Activated T-helper 1 cell treated with anti-CD3 and anti-CD28 coated beads, Interleukin-12 subunit alpha, Interleukin-12 subunit beta, Interleukin-2, Interleukin-4 antibody, amounts not matched to agents 30 ng/mL and 10 ng/mL and 1 ng/mL, durations not matched to agents 14 hours and 24 hours and 36 hours (primary cell): ENCODE measurements at regions of chr6 and their contacts with region 1.

Region 1: DNA sequence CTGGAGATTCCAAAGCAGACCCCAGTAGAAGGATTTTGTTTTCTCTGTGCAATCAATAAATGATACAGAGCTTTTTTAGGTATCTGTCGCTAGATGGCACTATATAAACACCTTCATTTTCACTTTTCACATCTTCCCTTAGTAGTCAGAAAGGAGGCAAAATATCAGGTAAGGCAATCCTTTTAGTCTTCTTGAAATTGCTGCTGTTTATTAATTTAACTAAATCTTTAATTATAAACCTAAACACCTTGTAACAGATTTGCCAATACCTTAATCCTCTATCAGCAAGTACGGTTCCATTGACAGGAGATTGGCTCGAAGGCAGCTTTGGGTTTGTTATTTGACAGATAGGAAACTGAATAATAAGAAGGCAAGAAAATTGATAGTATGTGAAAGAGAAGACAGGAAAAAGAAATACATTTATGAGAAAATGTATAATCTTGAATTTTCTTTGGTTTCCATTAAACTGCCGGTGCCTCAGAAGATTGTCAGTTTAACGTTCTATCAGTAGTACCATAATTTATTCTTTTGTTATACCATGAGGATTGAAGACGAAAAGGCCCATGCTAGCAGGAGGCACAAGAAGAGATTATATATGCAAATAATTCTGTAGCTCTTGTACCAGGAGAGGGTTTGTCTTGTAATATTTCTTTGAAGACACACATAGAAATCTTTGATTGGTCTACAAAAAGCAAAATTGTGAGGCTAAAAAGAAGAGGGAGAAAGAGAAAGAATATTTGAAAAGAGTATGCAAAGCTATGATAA is 23.5 kb upstream of the IBTK start:
- DNase-seq: no peak
- H3K4me3 Mint-ChIP-seq: no peak overlapping the region
- H3K27ac Mint-ChIP-seq: no peak overlapping the region
- H3K4me1 Mint-ChIP-seq: no peaks in the 10 kb centered on the region
- H3K27me3 Mint-ChIP-seq: peaks cover 11% of the 10 kb centered on the region

Region 2: DNA sequence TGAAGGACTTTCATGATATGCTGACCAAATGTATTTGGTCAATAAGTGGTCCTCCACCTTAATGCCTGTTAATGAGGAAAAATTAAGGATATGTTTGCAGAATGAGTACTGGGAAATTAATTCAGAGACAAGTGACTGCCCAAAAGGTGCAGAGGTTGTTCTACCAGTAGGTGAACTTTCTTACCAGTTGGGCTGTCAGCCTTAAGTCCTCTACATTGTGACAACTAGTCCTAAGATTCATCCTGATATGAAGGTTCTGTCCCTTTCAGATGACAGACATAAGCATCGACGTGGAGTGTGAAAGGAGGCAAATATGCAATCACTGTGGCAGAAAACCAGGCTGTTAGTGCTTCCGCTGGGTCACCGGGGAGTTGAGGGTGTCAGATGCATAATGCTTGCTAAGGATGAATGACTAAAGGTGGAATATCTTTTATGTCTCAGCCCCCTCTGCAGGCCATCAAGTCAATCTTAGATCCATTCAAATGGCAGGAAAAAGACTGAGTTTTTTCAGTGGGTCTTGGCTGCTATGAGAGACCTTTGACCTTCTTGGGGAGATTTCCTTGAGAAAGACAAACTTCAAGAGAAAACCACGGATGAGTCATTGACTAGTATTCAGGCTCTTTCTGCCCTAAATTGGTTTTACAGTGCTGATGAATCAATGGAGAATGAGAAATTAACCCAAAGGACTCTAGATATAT is 318.6 kb after region 1 on chr6:
- intact Hi-C with region 1: loop called (anchors 5 kb)
- DNase-seq: no peak
- H3K4me3 Mint-ChIP-seq: no peak overlapping the region
- H3K27ac Mint-ChIP-seq: no peak overlapping the region
- H3K4me1 Mint-ChIP-seq: no peaks in the 10 kb centered on the region
- H3K27me3 Mint-ChIP-seq: no peaks in the 10 kb centered on the region

Region 3: DNA sequence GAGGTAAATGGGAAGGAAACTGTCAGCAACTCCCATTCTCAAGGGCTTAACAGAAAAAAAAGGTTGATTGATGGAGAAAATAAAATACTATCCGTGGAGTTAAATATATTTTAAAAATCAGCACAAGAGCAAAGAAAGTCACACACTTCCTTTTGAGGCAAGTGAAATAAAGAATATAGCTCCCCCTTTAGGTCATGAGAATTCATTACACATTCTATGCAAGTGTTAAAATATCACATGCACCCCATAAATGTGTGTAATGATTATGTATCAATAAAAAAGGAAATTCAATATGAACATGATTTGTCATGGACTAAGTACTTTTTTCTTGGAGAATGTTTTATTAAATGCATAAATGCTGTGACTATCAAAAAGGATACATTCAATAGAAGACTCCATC is 441.8 kb after region 1 on chr6:
- intact Hi-C with region 1: loop called (anchors 1 kb)
- DNase-seq: no peak
- H3K4me3 Mint-ChIP-seq: no peak overlapping the region
- H3K27ac Mint-ChIP-seq: no peak overlapping the region
- H3K4me1 Mint-ChIP-seq: no peaks in the 10 kb centered on the region
- H3K27me3 Mint-ChIP-seq: no peaks in the 10 kb centered on the region

Region 4: GRCh38 chr6:83055366-83055964 is 784.4 kb after region 1 on chr6:
- intact Hi-C with region 1: loop called (anchors 1 kb)
- DNase-seq: no peak
- H3K4me3 Mint-ChIP-seq: no peak overlapping the region
- H3K27ac Mint-ChIP-seq: no peak overlapping the region
- H3K4me1 Mint-ChIP-seq: peaks cover 6% of the 10 kb centered on the region
- H3K27me3 Mint-ChIP-seq: no peaks in the 10 kb centered on the region

Region 5: DNA sequence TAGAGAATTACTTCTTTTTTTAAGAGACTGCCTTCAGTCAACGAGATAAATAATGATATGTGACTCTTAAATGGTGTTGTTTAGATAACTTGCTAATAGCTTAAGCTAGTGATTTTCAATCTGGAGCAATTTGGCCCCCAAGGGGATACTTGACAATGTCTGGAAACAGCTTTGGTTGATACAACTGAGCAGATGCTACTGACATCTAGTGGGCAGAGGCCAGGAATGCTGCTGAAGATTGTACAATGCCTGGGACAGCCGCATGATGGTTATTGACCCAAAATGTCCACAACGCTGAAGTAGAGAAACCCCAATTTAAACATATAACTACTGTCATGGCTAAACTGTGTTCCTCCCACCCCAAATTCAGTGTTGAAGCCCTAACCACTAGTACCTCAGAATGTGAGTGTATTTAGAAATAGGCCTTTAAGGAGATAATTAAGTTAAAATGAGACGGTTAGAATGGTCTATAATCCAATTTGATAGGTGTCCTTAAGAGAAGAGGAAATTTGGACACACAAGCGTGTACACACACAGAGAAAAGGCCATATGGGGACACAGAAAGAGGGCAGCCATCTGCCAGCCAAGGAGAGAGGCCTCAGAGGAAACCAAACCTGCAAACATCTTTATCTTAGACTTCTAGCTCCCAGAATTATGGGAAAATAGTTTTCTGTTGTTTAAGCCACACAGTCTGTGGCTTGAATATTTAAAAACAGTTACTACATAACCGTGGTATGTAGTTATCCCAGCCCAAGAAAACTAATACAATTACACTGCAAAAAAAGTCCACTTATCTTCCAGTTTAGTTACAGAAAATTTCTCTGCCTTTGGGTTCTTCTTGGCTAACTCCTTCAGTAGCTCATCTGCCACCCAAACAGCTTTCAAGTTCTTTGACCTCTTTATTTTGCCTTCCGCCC is 944.3 kb after region 1 on chr6:
- intact Hi-C with region 1: loop called (anchors 1 kb)
- DNase-seq: peak; percentile 40
- H3K4me3 Mint-ChIP-seq: no peak overlapping the region
- H3K27ac Mint-ChIP-seq: no peak overlapping the region
- H3K4me1 Mint-ChIP-seq: no peaks in the 10 kb centered on the region
- H3K27me3 Mint-ChIP-seq: peaks cover 19% of the 10 kb centered on the region

Region 6: GRCh38 chr6:83514866-83515466 is 1243.9 kb after region 1 on chr6:
- intact Hi-C with region 1: loop called (anchors 5 kb)
- DNase-seq: no peak
- H3K4me3 Mint-ChIP-seq: no peak overlapping the region
- H3K27ac Mint-ChIP-seq: no peak overlapping the region
- H3K4me1 Mint-ChIP-seq: peaks cover 9% of the 10 kb centered on the region
- H3K27me3 Mint-ChIP-seq: peaks cover 41% of the 10 kb centered on the region